Activated CD8-positive, alpha-beta T cell treated with anti-CD3 and anti-CD28 coated beads, Interleukin-2, amount 10 ng/mL, durations not matched to agents 7 days and 5 days (primary cell): ENCODE measurements at regions of chr12 and their contacts with region 1.

Region 1: DNA sequence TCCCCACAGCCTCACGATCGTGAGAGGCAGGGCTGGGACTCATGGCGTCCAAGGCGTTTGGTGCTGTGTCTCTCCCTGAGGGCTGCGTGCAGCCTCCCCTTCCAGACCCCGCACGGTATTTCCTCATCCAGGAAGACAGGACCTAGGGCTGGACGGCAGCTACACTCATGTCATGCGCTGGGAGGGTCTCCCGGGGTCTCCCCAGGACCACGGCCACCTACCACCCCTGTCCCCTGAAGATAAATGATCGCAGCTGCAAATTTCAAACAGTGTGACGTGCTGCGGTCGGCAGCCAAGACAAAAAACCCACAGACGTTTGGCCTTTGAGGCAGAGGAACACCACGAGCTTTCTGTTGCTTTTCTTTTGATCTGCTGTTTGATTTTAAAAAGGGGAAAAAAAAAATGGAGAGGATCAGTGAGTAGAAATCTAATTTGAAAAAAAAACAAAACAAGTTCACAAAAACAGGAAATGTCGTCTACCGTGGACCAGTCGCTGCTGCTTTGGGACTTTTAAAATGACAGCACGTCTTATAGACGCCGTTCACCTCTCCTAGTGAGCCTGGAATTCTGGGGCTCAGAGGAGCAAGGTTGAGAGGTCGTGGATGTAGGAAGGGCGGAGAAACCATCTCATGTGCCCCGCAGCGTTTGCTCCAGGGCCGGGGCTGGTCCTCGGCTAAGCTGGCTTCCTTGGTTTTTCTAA is 237.6 kb downstream of the SLC41A2 start:
- DNase-seq: peak; percentile 85
- ATAC-seq: peak; percentile 71
- H3K4me3 Mint-ChIP-seq: peak overlapping the region; percentile 74
- H3K27ac Mint-ChIP-seq: peak overlapping the region; percentile 90
- H3K4me1 Mint-ChIP-seq: peaks cover 80% of the 10 kb centered on the region
- H3K27me3 Mint-ChIP-seq: no peaks in the 10 kb centered on the region

Region 2: DNA sequence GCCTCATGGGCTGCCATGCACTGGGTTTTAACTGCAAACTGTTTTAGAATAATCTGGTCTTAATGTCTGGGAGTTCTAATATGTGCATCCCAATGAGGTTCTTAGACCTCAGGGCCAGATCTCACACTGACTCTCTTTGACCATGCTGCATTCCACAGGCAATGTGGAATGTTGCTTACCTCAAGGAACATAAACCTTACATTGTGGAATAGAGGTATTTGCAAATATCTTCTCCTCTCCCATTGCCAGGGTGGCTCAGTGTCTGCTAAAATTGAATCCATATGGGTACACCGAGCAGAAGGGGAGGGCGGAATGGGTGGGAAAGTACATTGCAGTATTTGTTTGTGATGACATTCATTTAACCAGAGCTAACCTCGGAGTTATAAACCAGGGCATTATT is 185.1 kb before region 1 on chr12:
- CTCF ChIA-PET with region 1: no interaction called
- POLR2A ChIA-PET with region 1: no interaction called
- DNase-seq: no peak
- ATAC-seq: no peak
- H3K4me3 Mint-ChIP-seq: no peak overlapping the region
- H3K27ac Mint-ChIP-seq: peak overlapping the region; percentile 18
- H3K4me1 Mint-ChIP-seq: peaks cover 51% of the 10 kb centered on the region
- H3K27me3 Mint-ChIP-seq: no peaks in the 10 kb centered on the region

Region 3: DNA sequence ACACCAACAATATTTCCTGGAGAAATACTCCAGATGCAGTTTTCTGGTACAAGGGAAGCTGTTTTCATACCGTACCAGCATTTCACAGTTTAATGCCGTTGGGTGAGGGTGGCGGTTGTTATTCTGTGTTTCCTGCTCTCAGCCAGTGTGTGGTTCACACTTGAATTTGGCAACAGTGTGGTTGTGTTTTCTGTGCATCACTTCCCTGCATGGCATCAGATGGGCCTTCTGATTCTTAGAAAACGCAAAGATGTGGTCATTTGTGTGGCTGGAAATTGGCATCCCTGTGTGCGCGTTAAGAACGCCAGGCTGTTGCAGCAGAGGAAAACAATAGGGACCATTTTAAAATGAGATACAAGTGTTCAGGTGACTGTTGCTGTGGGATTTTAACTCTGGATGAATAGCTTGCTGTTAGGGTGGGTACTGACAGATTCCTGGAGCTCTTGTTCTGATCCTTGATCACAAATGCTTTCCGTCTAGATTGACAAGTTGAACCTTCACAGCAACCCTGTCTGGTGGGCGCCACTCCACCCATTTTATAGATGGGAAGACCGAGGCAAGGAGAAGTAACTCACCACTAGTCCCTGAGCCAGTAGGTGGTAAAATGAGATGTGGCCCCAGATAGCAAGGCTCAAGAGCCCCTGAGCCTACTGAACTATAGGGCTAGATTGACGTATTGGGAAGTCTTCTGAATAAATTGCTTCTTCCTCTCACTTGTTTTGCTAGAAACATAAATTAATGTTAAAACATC is 32.5 kb before region 1 on chr12:
- CTCF ChIA-PET with region 1: interaction called, 5 read pairs
- POLR2A ChIA-PET with region 1: interaction called, 14 read pairs
- DNase-seq: peak; percentile 86
- ATAC-seq: peak; percentile 66
- H3K4me3 Mint-ChIP-seq: peak overlapping the region; percentile 61
- H3K27ac Mint-ChIP-seq: peak overlapping the region; percentile 94
- H3K4me1 Mint-ChIP-seq: peaks cover 93% of the 10 kb centered on the region
- H3K27me3 Mint-ChIP-seq: no peaks in the 10 kb centered on the region

Region 4: GRCh38 chr12:104695453-104696148 is 24.9 kb before region 1 on chr12:
- CTCF ChIA-PET with region 1: interaction called, 5 read pairs
- POLR2A ChIA-PET with region 1: interaction called, 15 read pairs
- DNase-seq: peak; percentile 78
- ATAC-seq: peak; percentile 89
- H3K4me3 Mint-ChIP-seq: peak overlapping the region; percentile 32
- H3K27ac Mint-ChIP-seq: peak overlapping the region; percentile 86
- H3K4me1 Mint-ChIP-seq: peaks cover 82% of the 10 kb centered on the region
- H3K27me3 Mint-ChIP-seq: no peaks in the 10 kb centered on the region

Region 5: DNA sequence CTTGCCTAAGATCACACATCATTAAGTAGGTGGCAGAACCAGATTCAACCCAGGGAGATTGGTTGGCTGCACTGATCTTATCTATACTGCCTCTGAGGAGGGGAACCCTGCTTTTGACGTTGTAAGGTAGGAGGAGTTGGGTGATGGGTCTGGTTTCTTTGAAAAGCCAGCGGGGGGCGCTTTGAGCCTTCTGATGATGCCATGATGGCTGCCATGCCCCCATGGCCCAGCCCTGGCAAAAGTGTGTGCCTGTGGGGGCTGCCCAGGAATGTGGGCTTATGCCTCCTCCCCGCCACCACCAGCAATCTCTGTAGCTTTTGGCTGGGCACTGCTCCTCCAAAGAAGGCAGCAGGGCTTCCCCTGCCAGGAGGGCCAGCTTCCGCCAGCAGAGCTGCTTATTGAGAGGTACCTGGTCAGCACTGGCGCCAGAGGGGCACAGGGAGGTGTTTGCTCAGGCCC is 13.3 kb after region 1 on chr12:
- CTCF ChIA-PET with region 1: interaction called, 10 read pairs
- POLR2A ChIA-PET with region 1: interaction called, 3 read pairs
- DNase-seq: peak; percentile 50
- ATAC-seq: peak; percentile 60
- H3K4me3 Mint-ChIP-seq: no peak overlapping the region
- H3K27ac Mint-ChIP-seq: no peak overlapping the region
- H3K4me1 Mint-ChIP-seq: peaks cover 76% of the 10 kb centered on the region
- H3K27me3 Mint-ChIP-seq: no peaks in the 10 kb centered on the region